Heart left ventricle (tissue), 16 donors: ENCODE measurements at regions of chr12 and their contacts with region 1.

Region 1: DNA sequence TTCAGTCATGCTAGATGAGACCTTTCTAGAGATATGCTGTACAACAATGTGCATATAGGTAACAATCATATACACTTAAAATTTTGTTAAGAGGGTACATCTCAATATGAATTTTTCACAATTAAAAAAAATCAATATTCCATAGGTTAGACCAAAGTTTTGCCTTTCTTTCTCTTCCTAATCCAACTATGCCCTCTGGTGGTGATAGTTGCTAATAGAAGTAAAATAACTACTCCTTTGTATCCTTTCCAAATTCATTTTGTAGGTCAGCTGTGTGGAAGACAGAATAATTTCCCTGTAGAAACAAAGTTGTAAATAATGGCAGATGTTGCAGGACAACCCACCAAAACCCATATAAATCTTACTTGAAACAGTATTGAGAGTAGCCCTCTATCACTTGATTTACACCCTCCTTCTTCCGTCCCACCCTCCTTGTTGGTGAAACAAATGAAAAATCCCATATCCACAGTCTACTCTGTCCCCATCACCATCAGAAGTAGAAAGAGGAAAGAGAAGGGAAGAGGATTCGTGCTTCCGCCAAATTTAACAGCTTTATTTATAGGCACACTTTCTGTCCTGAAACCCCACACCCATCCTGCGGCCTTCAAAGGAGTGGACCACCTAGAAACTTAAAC is 34.2 kb upstream of the KICS2 start:
- DNase-seq: no peak
- ATAC-seq: peak in 2 of 4 donors; percentile 43 to 50
- H3K4me3 ChIP-seq: peak overlapping the region in 2 of 12 donors; percentile 2 to 5
- H3K27ac ChIP-seq: no peak overlapping the region
- H3K4me1 ChIP-seq: peaks cover 0 to 13% (median 0%) of the 10 kb centered on the region in 12 donors
- H3K27me3 ChIP-seq: no peaks in the 10 kb centered on the region
- CTCF ChIP-seq: peak; percentile 57 to 85 (median 74)
- POLR2A ChIP-seq: no peak

Region 2: DNA sequence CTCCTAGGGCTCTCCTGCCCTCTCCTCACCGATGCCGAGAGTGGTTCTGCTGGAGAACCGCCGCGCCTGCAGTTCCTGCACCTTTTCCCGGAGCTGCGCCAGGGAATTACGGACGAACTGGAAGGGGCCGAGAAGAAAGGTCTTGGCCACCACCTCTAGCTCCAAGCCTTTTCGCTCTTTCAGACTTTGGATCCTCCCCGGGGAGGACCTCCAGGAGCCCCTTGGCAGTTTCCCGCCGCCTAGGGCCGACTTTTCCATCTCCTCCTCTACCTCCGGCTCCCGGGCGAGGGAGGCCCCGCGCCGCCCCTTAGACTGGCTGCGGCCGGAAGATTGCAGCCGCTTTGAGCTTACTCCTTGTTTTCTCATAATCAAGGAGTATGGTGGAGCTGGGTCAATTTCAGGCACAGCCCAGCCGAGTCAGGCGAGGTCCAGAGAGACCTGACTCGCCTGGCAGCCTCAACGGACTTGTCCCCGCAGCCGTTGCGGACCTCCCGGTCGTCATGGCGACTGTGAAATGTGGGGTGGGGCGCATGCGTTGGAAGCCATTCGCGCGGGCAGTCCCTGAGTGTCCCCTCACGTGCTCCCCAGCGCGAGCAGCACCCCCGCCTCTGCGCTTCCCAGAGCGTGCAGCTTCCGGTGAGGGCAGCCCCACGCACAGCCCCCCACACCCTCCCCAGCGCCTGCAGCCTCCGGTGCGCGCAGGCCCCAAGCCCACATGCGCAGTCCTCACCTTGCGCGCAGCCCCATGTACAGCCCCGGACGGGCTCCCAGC is 588.1 kb before region 1 on chr12 and contains the start of gene DPY19L2:
- intact Hi-C with region 1: loop called in 2 of 10 experiments (anchors 10 kb)
- DNase-seq: peak; percentile 83 to 92 (median 89)
- ATAC-seq: peak; percentile 95 to 98 (median 98)
- H3K4me3 ChIP-seq: peak within 1 kb of the TSS; percentile 44 to 86 (median 70)
- H3K27ac ChIP-seq: peak within 1 kb of the TSS; percentile 84 to 98 (median 92)
- H3K4me1 ChIP-seq: peaks cover 0 to 8% (median under 1%) of the 10 kb centered on the region in 12 donors
- H3K27me3 ChIP-seq: peaks cover 0 to 9% (median 0%) of the 10 kb centered on the region in 9 donors
- CTCF ChIP-seq: no peak
- POLR2A ChIP-seq: peak in 1 of 2 donors; percentile 31
- total RNA-seq, gene DPY19L2: 22.9 to 55.0 (median 44.6) TPM

Region 3: DNA sequence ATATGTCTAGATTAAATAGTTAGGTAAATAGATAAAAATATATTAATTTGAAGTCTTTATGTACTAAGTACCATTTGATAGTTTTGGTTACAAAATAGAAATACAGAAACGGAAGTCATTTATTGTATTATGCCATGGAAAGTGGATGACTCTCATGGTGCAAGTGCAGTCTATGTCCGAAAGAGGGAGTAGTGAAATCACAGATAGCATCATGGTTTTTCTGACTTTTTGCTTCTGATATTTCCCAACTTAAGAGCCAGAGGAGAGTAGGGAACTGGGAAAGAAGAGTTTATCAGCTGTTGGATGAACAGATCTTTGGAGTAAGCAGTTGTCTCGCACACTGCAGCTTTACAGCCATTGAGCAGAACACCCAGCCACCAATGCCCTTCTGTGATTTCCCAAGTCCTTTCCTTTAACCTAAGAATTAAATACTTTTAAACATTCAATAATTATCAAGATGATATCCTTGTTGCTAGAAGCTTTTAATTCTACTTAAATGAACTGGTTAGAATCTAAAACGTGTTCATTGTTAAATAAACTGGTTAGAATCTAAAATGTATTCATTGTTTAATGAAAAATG is 430.2 kb before region 1 on chr12:
- intact Hi-C with region 1: loop called in 1 of 10 experiments (anchors 5 kb)
- DNase-seq: no peak
- ATAC-seq: peak; percentile 26 to 67 (median 46)
- H3K4me3 ChIP-seq: no peak overlapping the region
- H3K27ac ChIP-seq: no peak overlapping the region
- H3K4me1 ChIP-seq: peaks cover 0 to 8% (median 0%) of the 10 kb centered on the region in 12 donors
- H3K27me3 ChIP-seq: peaks cover 0 to 7% (median 0%) of the 10 kb centered on the region in 9 donors
- CTCF ChIP-seq: peak; percentile 56 to 86 (median 64)
- POLR2A ChIP-seq: no peak

Region 4: GRCh38 chr12:63836936-63837335 is 419.3 kb before region 1 on chr12:
- intact Hi-C with region 1: loop called (anchors 1 to 5 kb)
- DNase-seq: no peak
- ATAC-seq: no peak
- H3K4me3 ChIP-seq: no peak overlapping the region
- H3K27ac ChIP-seq: no peak overlapping the region
- H3K4me1 ChIP-seq: no peaks in the 10 kb centered on the region
- H3K27me3 ChIP-seq: no peaks in the 10 kb centered on the region
- CTCF ChIP-seq: no peak
- POLR2A ChIP-seq: no peak

Region 5: GRCh38 chr12:64181504-64182291 is 74.6 kb before region 1 on chr12:
- intact Hi-C with region 1: loop called in 6 of 10 experiments (anchors 2 to 10 kb)
- DNase-seq: peak in 4 of 5 donors; percentile 40 to 52 (median 48)
- ATAC-seq: peak; percentile 88 to 92 (median 88)
- H3K4me3 ChIP-seq: peak overlapping the region in 1 of 12 donors; percentile 8
- H3K27ac ChIP-seq: peak overlapping the region in 6 of 12 donors; percentile 0 to 77 (median 48)
- H3K4me1 ChIP-seq: peaks cover 0 to 37% (median 5%) of the 10 kb centered on the region in 12 donors
- H3K27me3 ChIP-seq: no peaks in the 10 kb centered on the region
- CTCF ChIP-seq: peak; percentile 46 to 76 (median 66)
- POLR2A ChIP-seq: no peak

Region 6: DNA sequence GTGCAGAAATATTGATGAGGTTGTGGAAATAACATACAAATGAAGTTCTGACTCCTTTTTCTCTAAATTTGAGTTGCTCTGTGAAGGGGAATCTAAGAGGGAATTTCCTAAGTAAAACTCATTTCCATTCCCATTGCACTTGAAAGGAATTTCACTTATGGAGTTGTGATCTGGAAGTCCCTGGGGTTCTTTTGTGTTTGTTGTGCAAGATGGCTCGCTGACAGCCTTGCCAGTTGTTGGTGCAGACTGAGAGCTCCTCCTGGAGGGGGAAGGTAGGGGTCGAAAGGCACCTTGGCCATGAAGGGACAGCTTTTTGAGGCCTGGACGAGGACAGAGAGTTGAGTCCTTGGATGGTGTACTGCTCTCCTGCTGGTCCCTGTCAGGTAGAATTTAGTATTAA is 62.3 kb after region 1 on chr12:
- intact Hi-C with region 1: no loop called
- DNase-seq: no peak
- ATAC-seq: peak in 1 of 4 donors; percentile 45
- H3K4me3 ChIP-seq: no peak overlapping the region
- H3K27ac ChIP-seq: no peak overlapping the region
- H3K4me1 ChIP-seq: peaks cover 0 to 3% (median 0%) of the 10 kb centered on the region in 12 donors
- H3K27me3 ChIP-seq: no peaks in the 10 kb centered on the region
- CTCF ChIP-seq: peak in 2 of 12 donors; percentile 11 to 20
- POLR2A ChIP-seq: no peak

Region 7: GRCh38 chr12:65022960-65023359 is 766.7 kb after region 1 on chr12:
- intact Hi-C with region 1: no loop called
- DNase-seq: no peak
- ATAC-seq: no peak
- H3K4me3 ChIP-seq: no peak overlapping the region
- H3K27ac ChIP-seq: no peak overlapping the region
- H3K4me1 ChIP-seq: no peaks in the 10 kb centered on the region
- H3K27me3 ChIP-seq: peaks cover 0 to 20% (median 0%) of the 10 kb centered on the region in 9 donors
- CTCF ChIP-seq: no peak
- POLR2A ChIP-seq: no peak